ENCODE measurements at regions of chr7 and their contacts with region 1.

Region 1: DNA sequence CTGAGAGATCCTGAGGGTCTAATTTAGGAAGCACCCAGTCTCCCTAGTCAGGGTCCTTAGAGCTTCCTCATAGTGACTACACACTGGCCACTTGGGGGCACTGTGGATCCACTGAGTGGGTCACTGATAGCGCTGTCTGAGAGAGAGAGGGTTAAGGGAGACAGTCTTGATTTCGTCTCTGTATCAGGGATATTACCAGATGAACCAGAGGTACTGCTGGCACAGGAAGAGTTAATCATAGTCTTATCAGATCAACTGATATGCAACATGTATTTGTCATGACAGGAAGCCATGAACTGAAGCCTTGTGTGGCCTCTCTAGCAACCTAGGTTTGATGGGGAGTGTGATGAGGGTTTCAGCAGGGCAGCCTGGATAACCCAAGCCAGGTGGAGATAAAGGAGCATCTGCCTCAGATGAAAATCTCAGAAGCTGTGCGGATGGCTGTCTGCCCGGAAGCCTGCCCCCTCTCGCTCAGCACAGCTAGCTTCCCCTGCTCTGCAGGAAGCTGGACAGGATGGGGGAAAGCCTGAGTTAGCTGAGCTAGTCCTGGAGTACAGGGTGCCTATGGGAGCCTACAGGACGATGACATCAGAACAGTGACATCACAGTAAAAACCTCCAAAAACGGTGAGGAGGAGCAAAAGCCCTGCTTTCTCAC is 214.0 kb upstream of the PRSS1 start:
- DNase-seq: peak; percentile 69
- H3K4me3 ChIP-seq: no peak overlapping the region
- H3K27ac ChIP-seq: no peak overlapping the region
- H3K27me3 ChIP-seq: no peaks in the 10 kb centered on the region
- CTCF ChIP-seq: peak; percentile 92

Region 2: DNA sequence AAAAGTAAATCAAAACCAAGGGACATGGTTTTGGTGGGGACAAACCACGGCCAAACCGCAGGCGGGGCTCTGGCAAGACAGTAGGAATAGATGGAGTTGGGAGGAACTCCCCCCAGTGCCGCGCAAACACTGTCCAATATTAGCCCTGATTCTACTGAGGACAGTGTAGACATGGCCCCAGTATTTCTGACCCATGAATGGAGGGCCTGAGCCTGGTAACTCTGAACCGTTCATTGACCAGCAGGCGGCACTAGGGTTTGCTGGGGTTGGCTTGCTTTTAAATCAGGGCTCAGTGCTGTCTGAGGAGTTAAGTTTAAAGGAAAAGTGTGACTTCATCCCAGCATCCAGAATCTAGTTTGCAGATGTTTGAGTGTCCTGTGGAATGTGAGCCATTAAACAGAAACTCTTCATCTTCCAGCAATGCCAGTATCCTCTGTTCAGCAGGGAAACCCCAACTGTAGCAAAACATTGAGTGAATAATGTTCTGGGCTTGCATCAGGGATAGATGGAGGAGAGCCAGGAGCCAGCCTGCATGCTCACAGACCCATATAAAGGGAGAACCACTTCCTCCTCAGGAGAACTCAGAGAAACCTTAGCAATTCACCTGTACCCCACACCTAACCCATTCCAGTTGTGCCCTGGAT is 130.0 kb before region 1 on chr7:
- CTCF ChIA-PET with region 1: no interaction called
- POLR2A ChIA-PET with region 1: no interaction called
- DNase-seq: no peak
- H3K4me3 ChIP-seq: no peak overlapping the region
- H3K27ac ChIP-seq: no peak overlapping the region
- H3K27me3 ChIP-seq: peaks cover 9% of the 10 kb centered on the region
- CTCF ChIP-seq: peak; percentile 14; the same call in 1 of the 2 replicates

Region 3: GRCh38 chr7:142459551-142459963 is 75.7 kb before region 1 on chr7:
- CTCF ChIA-PET with region 1: interaction called, 12 read pairs
- POLR2A ChIA-PET with region 1: no interaction called
- DNase-seq: peak; percentile 59
- H3K4me3 ChIP-seq: no peak overlapping the region
- H3K27ac ChIP-seq: no peak overlapping the region
- H3K27me3 ChIP-seq: no peaks in the 10 kb centered on the region
- CTCF ChIP-seq: peak; percentile 74

Region 4: GRCh38 chr7:142516038-142516501 is 19.2 kb before region 1 on chr7:
- CTCF ChIA-PET with region 1: interaction called, 35 read pairs
- POLR2A ChIA-PET with region 1: no interaction called
- DNase-seq: peak; percentile 29
- H3K4me3 ChIP-seq: no peak overlapping the region
- H3K27ac ChIP-seq: no peak overlapping the region
- H3K27me3 ChIP-seq: peaks cover 11% of the 10 kb centered on the region
- CTCF ChIP-seq: peak; percentile 80

Region 5: GRCh38 chr7:142557971-142558582 is 22.8 kb after region 1 on chr7:
- CTCF ChIA-PET with region 1: interaction called, 15 read pairs
- POLR2A ChIA-PET with region 1: interaction called, 5 read pairs
- DNase-seq: no peak
- H3K4me3 ChIP-seq: no peak overlapping the region
- H3K27ac ChIP-seq: no peak overlapping the region
- H3K27me3 ChIP-seq: no peaks in the 10 kb centered on the region
- CTCF ChIP-seq: peak; percentile 65

Region 6: GRCh38 chr7:142632291-142633134 is 97.3 kb after region 1 on chr7:
- CTCF ChIA-PET with region 1: interaction called, 66 read pairs
- POLR2A ChIA-PET with region 1: interaction called, 3 read pairs
- DNase-seq: no peak
- H3K4me3 ChIP-seq: no peak overlapping the region
- H3K27ac ChIP-seq: no peak overlapping the region
- H3K27me3 ChIP-seq: peaks cover 2% of the 10 kb centered on the region
- CTCF ChIP-seq: peak; percentile 77

Region 7: DNA sequence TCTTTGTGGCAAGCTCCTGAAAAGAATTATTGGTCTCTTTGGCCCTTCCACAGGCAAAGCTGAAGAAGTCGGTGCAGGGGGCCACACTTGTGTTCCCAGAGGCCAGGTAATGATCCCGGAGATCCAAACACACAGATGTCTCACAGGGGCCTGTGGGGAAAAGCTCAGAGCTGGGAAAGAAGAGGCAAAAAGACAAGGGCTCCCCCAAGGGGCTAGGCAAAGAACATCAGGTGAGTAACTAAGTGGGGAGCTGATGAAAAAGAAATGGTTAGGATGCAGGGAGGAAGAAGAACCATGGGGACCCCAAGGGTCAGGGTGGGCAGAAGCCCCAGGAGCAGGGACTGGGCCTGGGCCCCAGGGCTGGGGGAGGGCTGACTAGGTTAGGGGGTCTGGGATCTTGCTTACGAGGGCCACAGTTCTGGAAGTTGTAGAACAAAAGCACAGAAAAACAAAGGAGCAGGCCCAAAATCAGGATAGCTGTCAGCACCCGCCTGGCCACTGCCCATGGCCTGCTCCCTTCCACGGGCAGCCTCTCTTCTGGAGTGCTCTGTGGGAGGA is 425.8 kb after region 1 on chr7:
- CTCF ChIA-PET with region 1: no interaction called
- POLR2A ChIA-PET with region 1: no interaction called
- DNase-seq: no peak
- H3K4me3 ChIP-seq: no peak overlapping the region
- H3K27ac ChIP-seq: no peak overlapping the region
- H3K27me3 ChIP-seq: no peaks in the 10 kb centered on the region
- CTCF ChIP-seq: no peak